ENCODE measurements at regions of chr6 and their contacts with region 1.

Region 1: DNA sequence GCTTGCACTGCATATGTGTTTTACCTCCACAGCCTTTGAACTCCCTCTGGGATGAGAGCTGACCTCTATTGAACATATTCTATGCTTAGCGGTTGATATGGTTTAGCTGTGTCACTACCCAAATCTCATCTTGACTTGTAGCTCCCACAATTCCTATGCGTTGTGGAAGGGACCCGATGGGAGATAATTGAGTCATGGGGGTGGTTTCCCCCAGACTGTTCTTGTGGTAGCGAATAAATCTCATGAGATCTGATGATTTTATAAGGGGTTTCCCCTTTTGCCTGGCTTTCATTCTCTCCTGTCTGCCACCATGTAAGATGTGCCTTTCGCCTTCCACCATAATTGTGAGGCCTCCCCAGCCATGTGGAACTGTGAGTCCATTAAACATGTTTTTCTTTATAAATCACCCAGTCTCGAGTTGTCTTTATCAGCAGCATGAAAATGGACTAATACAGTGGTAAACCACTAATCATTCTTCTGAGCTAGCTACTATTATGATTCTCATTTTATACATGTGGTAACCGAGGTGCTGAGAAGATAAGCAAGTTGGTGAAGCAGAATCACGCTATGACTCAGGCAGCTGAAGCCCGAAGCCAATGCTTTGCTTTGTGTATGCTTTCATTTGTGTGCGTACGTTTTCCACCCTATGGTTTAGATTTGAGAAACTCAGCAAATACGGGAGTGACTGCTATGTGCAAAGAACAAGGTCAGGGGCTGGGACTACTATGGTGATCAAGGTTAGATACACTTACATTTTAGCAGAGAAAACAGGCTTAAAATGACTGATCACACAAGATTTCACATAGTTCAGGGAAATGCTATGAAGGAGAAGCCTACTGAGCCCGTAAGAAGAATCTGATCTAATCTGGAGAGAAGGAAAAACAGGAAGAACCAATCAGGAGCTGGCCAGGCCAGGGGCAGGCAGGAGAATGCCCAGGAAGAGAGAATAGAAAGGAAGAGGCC is 363.5 kb downstream of the ESR1 start:
- DNase-seq: peak in 5 of 9 experiments; percentile 23 to 85 (median 56)
- ATAC-seq: peak; percentile 81
- H3K4me3 ChIP-seq: peak overlapping the region in 1 of 2 experiments; percentile 22
- H3K4me3 Mint-ChIP-seq: peak overlapping the region; percentile 76
- H3K27ac ChIP-seq: peak overlapping the region; percentile 40 to 84
- H3K27ac Mint-ChIP-seq: peak overlapping the region; percentile 96
- H3K4me1 ChIP-seq: peaks cover 13% of the 10 kb centered on the region
- H3K4me1 Mint-ChIP-seq: peaks cover 56% of the 10 kb centered on the region
- H3K27me3 ChIP-seq: no peaks in the 10 kb centered on the region
- H3K27me3 Mint-ChIP-seq: no peaks in the 10 kb centered on the region
- CTCF ChIP-seq: no peak

Region 2: GRCh38 chr6:150788089-150788488 is 1382.9 kb before region 1 on chr6:
- CTCF ChIA-PET with region 1: no interaction called
- POLR2A ChIA-PET with region 1: no interaction called
- intact Hi-C with region 1: no loop called
- DNase-seq: no peak
- ATAC-seq: no peak
- H3K4me3 ChIP-seq: no peak overlapping the region
- H3K4me3 Mint-ChIP-seq: no peak overlapping the region
- H3K27ac ChIP-seq: no peak overlapping the region
- H3K27ac Mint-ChIP-seq: no peak overlapping the region
- H3K4me1 ChIP-seq: no peaks in the 10 kb centered on the region
- H3K4me1 Mint-ChIP-seq: no peaks in the 10 kb centered on the region
- H3K27me3 ChIP-seq: no peaks in the 10 kb centered on the region
- H3K27me3 Mint-ChIP-seq: peaks cover under 1% of the 10 kb centered on the region
- CTCF ChIP-seq: no peak

Region 3: DNA sequence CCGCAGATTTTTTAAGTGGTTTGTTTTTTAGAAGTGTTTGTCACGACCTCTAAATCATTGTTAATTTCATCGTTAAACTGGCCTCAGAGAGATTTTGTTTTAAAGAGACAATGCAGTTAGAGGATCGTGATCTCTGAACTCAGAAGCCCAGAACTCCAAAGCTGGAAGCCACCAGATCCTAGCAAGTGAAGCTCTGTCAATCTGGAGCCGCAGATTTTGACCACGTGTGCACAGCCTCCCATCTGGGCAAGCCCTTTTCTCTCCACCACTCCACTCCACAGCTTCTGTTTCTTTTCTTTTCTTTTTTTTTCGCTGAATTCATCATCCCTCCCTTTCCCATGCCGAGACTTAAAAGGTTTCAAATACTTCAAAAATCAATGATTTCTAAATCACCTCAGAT is 505.7 kb before region 1 on chr6:
- CTCF ChIA-PET with region 1: no interaction called
- POLR2A ChIA-PET with region 1: no interaction called
- intact Hi-C with region 1: no loop called
- DNase-seq: no peak
- ATAC-seq: no peak
- H3K4me3 ChIP-seq: no peak overlapping the region
- H3K4me3 Mint-ChIP-seq: no peak overlapping the region
- H3K27ac ChIP-seq: no peak overlapping the region
- H3K27ac Mint-ChIP-seq: no peak overlapping the region
- H3K4me1 ChIP-seq: no peaks in the 10 kb centered on the region
- H3K4me1 Mint-ChIP-seq: no peaks in the 10 kb centered on the region
- H3K27me3 ChIP-seq: peaks cover 0 to 6% of the 10 kb centered on the region in 2 experiments
- H3K27me3 Mint-ChIP-seq: peaks cover 9% of the 10 kb centered on the region
- CTCF ChIP-seq: no peak

Region 4: GRCh38 chr6:152201120-152201519 is 30.1 kb after region 1 on chr6:
- CTCF ChIA-PET with region 1: interaction called, 3 read pairs
- POLR2A ChIA-PET with region 1: interaction called, 4 read pairs
- intact Hi-C with region 1: loop called in 1 of 2 experiments (anchors 5 kb)
- DNase-seq: no peak
- ATAC-seq: no peak
- H3K4me3 ChIP-seq: no peak overlapping the region
- H3K4me3 Mint-ChIP-seq: no peak overlapping the region
- H3K27ac ChIP-seq: no peak overlapping the region
- H3K27ac Mint-ChIP-seq: no peak overlapping the region
- H3K4me1 ChIP-seq: no peaks in the 10 kb centered on the region
- H3K4me1 Mint-ChIP-seq: peaks cover 9% of the 10 kb centered on the region
- H3K27me3 ChIP-seq: no peaks in the 10 kb centered on the region
- H3K27me3 Mint-ChIP-seq: no peaks in the 10 kb centered on the region
- CTCF ChIP-seq: no peak

Measured in CD8-positive, alpha-beta T cell (primary cell).